Activated naive CD4-positive, alpha-beta T cell treated with anti-CD3 and anti-CD28 coated beads for 36 hours (primary cell): ENCODE measurements at regions of chr13 and their contacts with region 1.

Region 1: DNA sequence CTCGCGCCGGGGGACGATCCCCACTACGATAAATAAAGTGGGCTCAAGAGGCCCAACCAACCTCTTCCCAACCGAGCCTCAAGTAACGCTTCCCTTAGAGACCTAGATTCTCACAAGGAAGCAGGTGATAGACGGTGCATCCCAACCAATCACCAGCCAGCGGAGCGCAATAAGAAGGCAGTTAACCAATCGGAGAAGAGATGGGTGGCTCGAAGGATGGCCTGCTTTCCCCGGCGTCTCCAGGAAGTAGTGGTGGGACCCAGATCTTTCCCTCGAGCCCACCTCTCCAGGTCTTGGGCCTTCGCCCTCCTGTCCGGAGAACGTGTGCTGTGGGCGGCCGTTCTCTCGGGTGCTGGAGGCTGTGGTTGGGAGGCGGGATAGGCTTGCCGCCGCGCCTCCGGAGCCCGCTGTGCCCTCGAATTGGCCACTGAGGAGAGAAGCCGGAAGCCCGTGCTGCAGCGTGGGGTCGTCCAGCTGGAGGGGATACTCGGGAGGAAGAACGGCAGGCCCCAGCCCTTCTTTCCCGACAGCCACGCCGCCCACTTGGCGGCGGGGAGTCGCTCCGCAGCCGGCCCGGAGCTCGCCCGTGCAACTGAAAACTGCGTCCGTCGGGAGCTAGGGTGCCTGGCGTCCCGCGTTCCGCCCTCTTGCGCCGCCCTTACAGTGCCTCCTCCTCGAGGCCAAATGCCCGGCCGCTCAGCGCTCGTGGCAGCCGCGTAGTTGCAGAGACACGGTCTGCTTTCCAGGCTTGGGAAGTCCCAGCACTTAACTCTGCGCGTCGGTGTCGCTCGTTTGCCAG is at the start of gene RNF6:
- DNase-seq: peak; percentile 92
- H3K4me3 Mint-ChIP-seq: peak within 1 kb of the TSS; percentile 91
- H3K27ac Mint-ChIP-seq: peak within 1 kb of the TSS; percentile 100
- H3K4me1 Mint-ChIP-seq: peaks cover 30% of the 10 kb centered on the region
- H3K27me3 Mint-ChIP-seq: peaks cover 2% of the 10 kb centered on the region
- total RNA-seq, gene RNF6: 38.2 to 39.4 TPM

Region 2: GRCh38 chr13:26236296-26236695 is 14.4 kb after region 1 on chr13:
- CTCF ChIA-PET with region 1: interaction called, 4 read pairs
- intact Hi-C with region 1: loop called (anchors 1 kb)
- DNase-seq: no peak
- H3K4me3 Mint-ChIP-seq: no peak overlapping the region
- H3K27ac Mint-ChIP-seq: no peak overlapping the region
- H3K4me1 Mint-ChIP-seq: peaks cover 9% of the 10 kb centered on the region
- H3K27me3 Mint-ChIP-seq: peaks cover 7% of the 10 kb centered on the region

Region 3: DNA sequence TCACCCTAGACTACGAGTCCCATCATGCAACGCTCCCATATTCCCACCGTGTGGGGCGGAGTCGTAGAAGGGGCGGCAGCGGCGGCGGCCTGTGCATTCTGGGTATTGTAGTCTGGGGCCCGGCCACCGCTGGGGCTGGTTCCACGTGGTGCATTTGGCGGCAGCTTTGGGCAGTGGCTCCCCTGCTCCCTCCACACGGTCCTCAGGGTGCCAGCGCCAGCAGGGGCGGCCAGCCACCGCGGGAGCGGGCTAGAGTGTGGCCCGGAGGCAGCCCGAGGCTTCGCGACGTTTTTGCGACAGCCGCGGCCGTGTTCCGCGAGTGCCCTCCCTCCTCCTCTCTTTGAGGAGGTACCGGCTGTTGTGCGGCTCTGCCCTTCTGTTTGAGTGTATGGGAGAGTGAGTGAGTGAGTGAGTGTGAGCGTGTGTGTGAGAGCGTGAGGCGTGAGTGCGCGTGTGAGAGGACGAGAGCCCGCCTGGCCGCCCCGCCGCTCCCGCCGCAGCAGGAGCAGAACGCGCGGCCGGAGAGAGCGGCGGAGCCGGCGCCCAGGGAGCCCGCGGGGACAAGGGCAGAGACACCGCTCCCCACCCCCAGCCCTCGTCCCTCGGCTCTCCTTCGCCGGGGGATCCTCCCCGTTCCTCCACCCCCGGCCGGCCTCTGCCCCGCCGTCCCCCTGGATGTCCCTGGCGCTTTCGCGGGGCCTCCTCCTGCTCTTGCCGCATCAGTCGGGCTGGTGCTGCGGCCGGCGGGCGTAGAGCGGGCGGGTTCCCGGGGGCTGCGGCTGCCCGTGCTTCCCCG is 32.1 kb after region 1 on chr13 and contains the start of gene CDK8:
- CTCF ChIA-PET with region 1: interaction called, 3 read pairs
- intact Hi-C with region 1: loop called (anchors 1 kb)
- DNase-seq: peak; percentile 89
- H3K4me3 Mint-ChIP-seq: peak within 1 kb of the TSS; percentile 87
- H3K27ac Mint-ChIP-seq: peak within 1 kb of the TSS; percentile 54
- H3K4me1 Mint-ChIP-seq: peaks cover 36% of the 10 kb centered on the region
- H3K27me3 Mint-ChIP-seq: no peaks in the 10 kb centered on the region
- total RNA-seq, gene CDK8: 15.4 to 15.9 TPM